ENCODE measurements at regions of chr4 and their contacts with region 1.

Region 1: DNA sequence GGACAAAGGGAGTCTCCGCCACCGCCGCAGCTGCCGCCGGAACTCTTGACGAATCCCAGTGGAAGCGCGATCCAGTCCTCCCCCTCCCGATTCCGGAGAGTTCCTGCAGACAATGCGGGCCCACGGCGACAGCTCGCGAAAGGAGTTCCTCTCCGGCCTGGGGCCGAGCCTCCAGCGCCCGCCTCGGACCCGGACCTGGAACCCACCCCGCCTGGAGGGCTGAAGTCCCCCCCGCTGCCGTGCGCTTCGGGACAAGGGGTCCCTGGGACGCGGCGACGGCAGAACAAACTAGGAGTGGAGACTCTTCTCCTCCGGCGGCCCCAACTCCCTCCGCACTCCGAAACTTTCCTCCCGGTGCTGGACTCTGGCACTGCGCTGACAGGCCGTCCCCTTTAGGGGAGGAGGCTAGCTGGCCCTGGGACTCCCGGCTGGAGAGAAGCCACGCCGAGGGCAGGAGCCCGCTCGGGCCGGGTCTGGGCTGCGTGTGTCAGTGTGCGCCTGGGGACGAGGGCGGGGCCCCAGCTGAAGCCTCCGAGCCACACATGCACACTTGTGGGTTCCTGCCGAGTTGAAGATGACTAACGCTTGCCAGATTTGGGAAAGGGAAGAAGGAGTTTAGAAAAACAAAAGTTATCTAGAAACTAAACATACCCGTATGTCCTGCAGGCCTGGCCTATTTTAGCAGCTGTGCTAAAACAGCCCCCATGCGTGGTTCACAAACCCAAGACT is at the start of gene ANTXR2:
- DNase-seq: peak; percentile 87 to 94 (median 88)
- H3K4me3 ChIP-seq: peak within 1 kb of the TSS; percentile 93
- H3K27ac ChIP-seq: peak within 1 kb of the TSS; percentile 84 to 96
- H3K4me1 ChIP-seq: peaks cover 4% of the 10 kb centered on the region
- H3K27me3 ChIP-seq: no peaks in the 10 kb centered on the region
- CTCF ChIP-seq: no peak
- EP300 ChIP-seq: no peak
- POLR2A ChIP-seq: peak; percentile 32
- total RNA-seq, gene ANTXR2: 78.3 to 230 (median 88.7) TPM

Region 2: DNA sequence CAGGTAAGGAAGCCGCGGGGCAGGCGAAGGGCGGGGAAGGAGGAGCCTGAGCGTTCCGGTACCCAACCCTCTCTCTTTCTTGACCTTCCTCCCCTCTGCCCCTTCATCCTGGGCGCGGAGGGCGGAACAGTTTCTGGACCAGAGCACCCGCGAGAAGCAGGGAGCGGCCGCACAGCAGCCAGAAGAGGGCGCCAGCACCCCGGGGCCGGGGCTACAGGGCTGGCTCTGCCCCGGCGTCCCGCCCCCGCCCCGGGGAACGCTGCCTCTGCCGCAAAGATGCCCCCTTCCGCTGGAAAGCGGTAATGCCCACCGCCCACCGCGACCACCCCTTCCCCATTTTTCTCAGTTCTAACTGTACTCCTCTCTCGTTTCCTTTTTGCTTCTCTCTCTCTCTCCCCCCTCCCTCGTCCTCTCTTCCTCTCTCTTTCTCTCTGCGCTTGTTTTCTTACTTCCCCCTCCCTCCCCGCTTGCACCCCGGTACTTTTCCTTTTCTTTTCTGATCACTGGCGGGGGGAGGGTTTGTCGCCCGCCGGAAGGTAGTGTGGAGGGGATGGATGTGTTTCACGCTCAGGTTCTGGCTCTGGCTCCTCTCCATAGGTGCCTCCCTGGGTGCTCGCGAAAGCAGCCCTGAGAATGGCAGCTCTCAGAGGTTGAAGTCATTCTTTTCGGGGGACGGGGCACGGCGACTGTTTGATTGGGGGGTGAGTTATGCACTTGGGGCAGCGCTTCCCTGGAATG is 111.3 kb after region 1 on chr4:
- intact Hi-C with region 1: loop called in 2 of 4 experiments (anchors 5 to 10 kb)
- DNase-seq: peak; percentile 91 to 96 (median 93)
- H3K4me3 ChIP-seq: peak overlapping the region; percentile 78
- H3K27ac ChIP-seq: peak overlapping the region; percentile 73 to 86
- H3K4me1 ChIP-seq: peaks cover 14% of the 10 kb centered on the region
- H3K27me3 ChIP-seq: no peaks in the 10 kb centered on the region
- CTCF ChIP-seq: peak; percentile 85 to 99 (median 85)
- EP300 ChIP-seq: no peak
- POLR2A ChIP-seq: no peak

Region 3: DNA sequence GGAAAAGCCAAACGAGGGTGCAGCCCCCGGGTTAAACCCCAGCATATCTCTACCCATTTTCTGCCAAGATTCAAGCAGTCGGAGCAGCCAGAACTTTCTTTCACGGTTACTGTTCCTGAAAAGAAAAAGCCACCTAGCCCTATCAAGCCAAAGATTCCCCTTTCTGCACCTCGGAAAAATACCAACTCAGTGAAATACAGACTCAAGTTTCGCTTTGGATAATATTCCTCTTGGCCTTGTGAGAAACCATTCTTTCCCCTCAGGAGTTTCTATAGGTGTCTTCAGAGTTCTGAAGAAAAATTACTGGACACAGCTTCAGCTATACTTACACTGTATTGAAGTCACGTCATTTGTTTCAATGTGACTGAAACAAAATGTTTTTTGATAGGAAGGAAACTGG is 213.5 kb after region 1 on chr4:
- intact Hi-C with region 1: no loop called
- DNase-seq: no peak
- H3K4me3 ChIP-seq: no peak overlapping the region
- H3K27ac ChIP-seq: no peak overlapping the region
- H3K4me1 ChIP-seq: no peaks in the 10 kb centered on the region
- H3K27me3 ChIP-seq: no peaks in the 10 kb centered on the region
- CTCF ChIP-seq: no peak
- EP300 ChIP-seq: no peak
- POLR2A ChIP-seq: no peak